CD14-positive monocyte (primary cell): ENCODE measurements at regions of chr2 and their contacts with region 1.

Region 1: GRCh38 chr2:25131567-25132298 is 36.6 kb downstream of the POMC start:
- DNase-seq: no peak
- H3K4me3 ChIP-seq: peak overlapping the region in 1 of 3 experiments; percentile 51
- H3K4me3 Mint-ChIP-seq: peak overlapping the region; percentile 73 to 87
- H3K27ac ChIP-seq: no peak overlapping the region
- H3K27ac Mint-ChIP-seq: no peak overlapping the region
- H3K4me1 ChIP-seq: peaks cover 8 to 16% of the 10 kb centered on the region in 2 donors
- H3K4me1 Mint-ChIP-seq: peaks cover 20% of the 10 kb centered on the region
- H3K27me3 ChIP-seq: peaks cover 22 to 56% of the 10 kb centered on the region in 2 donors
- H3K27me3 Mint-ChIP-seq: peaks cover 60 to 71% (median 67%) of the 10 kb centered on the region in 3 donors
- CTCF ChIP-seq: no peak

Region 2: GRCh38 chr2:24409700-24410556 is 721.8 kb before region 1 on chr2:
- intact Hi-C with region 1: loop called in 1 of 2 experiments (anchors 5 kb)
- DNase-seq: peak; percentile 37 to 58 (median 58)
- H3K4me3 ChIP-seq: no peak overlapping the region
- H3K4me3 Mint-ChIP-seq: no peak overlapping the region
- H3K27ac ChIP-seq: no peak overlapping the region
- H3K27ac Mint-ChIP-seq: no peak overlapping the region
- H3K4me1 ChIP-seq: no peaks in the 10 kb centered on the region
- H3K4me1 Mint-ChIP-seq: no peaks in the 10 kb centered on the region
- H3K27me3 ChIP-seq: peaks cover 0 to 4% of the 10 kb centered on the region in 2 donors
- H3K27me3 Mint-ChIP-seq: peaks cover 0 to 9% (median 0%) of the 10 kb centered on the region in 3 donors
- CTCF ChIP-seq: peak; percentile 80

Region 3: GRCh38 chr2:24971536-24972314 is 160.0 kb before region 1 on chr2 and contains the start of gene DNAJC27:
- intact Hi-C with region 1: loop called (anchors 2 kb)
- DNase-seq: peak; percentile 95 to 97 (median 96)
- H3K4me3 ChIP-seq: peak within 1 kb of the TSS; percentile 64 to 84 (median 76)
- H3K4me3 Mint-ChIP-seq: peak within 1 kb of the TSS; percentile 92 to 97
- H3K27ac ChIP-seq: peak within 1 kb of the TSS; percentile 95 to 96
- H3K27ac Mint-ChIP-seq: peak within 1 kb of the TSS; percentile 99 to 100 (median 100)
- H3K4me1 ChIP-seq: peaks cover 6 to 26% of the 10 kb centered on the region in 2 donors
- H3K4me1 Mint-ChIP-seq: peaks cover 13% of the 10 kb centered on the region
- H3K27me3 ChIP-seq: no peaks in the 10 kb centered on the region
- H3K27me3 Mint-ChIP-seq: no peaks in the 10 kb centered on the region
- CTCF ChIP-seq: no peak
- polyA plus RNA-seq, gene DNAJC27: 0.86 to 2.8 (median 2.2) TPM

Region 4: GRCh38 chr2:24977631-24978030 is 154.1 kb before region 1 on chr2:
- intact Hi-C with region 1: loop called (anchors 2 kb)
- DNase-seq: no peak
- H3K4me3 ChIP-seq: no peak overlapping the region
- H3K4me3 Mint-ChIP-seq: no peak overlapping the region
- H3K27ac ChIP-seq: no peak overlapping the region
- H3K27ac Mint-ChIP-seq: no peak overlapping the region
- H3K4me1 ChIP-seq: peaks cover 0 to 8% of the 10 kb centered on the region in 2 donors
- H3K4me1 Mint-ChIP-seq: peaks cover 4% of the 10 kb centered on the region
- H3K27me3 ChIP-seq: no peaks in the 10 kb centered on the region
- H3K27me3 Mint-ChIP-seq: peaks cover 0 to 3% (median 0%) of the 10 kb centered on the region in 3 donors
- CTCF ChIP-seq: no peak

Region 5: GRCh38 chr2:25041928-25042320 is 89.8 kb before region 1 on chr2 and contains the start of gene EFR3B:
- intact Hi-C with region 1: loop called in 1 of 2 experiments (anchors 5 kb)
- DNase-seq: peak; percentile 90 to 92 (median 91)
- H3K4me3 ChIP-seq: peak within 1 kb of the TSS; percentile 38 to 81 (median 40)
- H3K4me3 Mint-ChIP-seq: peak within 1 kb of the TSS; percentile 77 to 92
- H3K27ac ChIP-seq: no peak within 1 kb of the TSS
- H3K27ac Mint-ChIP-seq: peak within 1 kb of the TSS in 3 of 7 donors; percentile 31 to 54 (median 54)
- H3K4me1 ChIP-seq: peaks cover 18 to 20% of the 10 kb centered on the region in 2 donors
- H3K4me1 Mint-ChIP-seq: peaks cover 24% of the 10 kb centered on the region
- H3K27me3 ChIP-seq: peaks cover 28 to 52% of the 10 kb centered on the region in 2 donors
- H3K27me3 Mint-ChIP-seq: peaks cover 53 to 73% (median 58%) of the 10 kb centered on the region in 3 donors
- CTCF ChIP-seq: no peak
- polyA plus RNA-seq, gene EFR3B: not detected

Region 6: DNA sequence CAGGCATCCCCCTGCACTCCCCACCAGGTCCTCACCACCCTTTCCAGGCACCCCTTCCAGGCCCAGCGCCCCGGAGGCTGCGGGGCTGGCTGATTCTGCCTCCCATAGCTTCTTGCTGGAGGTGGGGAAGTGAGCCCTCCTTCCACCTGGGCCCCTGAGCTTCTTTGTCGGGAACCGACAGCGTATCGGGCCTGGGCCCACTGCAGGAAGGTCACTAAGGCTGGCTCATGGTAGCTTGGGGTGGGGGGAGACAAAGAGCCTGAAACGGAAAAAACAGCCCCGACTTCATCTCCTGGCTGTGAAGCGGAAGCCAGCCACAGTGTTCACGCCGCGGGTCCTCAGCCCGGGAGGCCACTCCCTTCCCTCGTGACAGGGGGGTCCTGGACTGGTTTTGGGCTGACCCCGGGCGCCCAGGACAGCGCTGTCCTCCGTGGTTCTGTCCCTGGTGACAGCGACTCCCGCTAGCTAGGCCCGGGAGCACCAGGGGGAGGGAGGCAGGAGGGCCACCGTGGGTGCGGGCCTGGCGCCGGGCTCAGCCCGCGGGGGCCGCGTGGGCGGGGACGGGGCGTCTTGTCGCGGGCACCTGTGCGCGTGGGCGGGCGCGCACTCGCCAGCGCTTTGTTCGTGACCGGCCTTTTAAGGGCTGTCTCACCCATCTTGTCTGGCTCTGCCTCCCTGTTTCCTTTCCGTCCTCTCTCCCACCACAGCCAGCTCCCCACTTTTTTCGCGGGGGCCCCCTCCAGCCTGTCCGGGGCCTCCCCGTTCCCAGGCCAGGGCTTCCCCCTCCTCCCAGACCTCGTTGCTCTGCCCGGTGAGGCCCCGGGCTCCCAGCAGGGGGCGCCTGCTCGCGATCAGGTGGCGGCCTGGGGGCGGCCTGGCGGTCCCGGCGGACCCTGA is 145.1 kb after region 1 on chr2:
- intact Hi-C with region 1: no loop called
- DNase-seq: peak; percentile 59 to 63 (median 63)
- H3K4me3 ChIP-seq: peak overlapping the region; percentile 25 to 74 (median 35)
- H3K4me3 Mint-ChIP-seq: peak overlapping the region; percentile 76 to 85
- H3K27ac ChIP-seq: peak overlapping the region in 1 of 2 donors; percentile 50
- H3K27ac Mint-ChIP-seq: peak overlapping the region in 4 of 7 donors; percentile 30 to 88 (median 69)
- H3K4me1 ChIP-seq: peaks cover 76 to 82% of the 10 kb centered on the region in 2 donors
- H3K4me1 Mint-ChIP-seq: peaks cover 70% of the 10 kb centered on the region
- H3K27me3 ChIP-seq: no peaks in the 10 kb centered on the region
- H3K27me3 Mint-ChIP-seq: peaks cover 3 to 11% (median 11%) of the 10 kb centered on the region in 3 donors
- CTCF ChIP-seq: peak; percentile 99

Region 7: DNA sequence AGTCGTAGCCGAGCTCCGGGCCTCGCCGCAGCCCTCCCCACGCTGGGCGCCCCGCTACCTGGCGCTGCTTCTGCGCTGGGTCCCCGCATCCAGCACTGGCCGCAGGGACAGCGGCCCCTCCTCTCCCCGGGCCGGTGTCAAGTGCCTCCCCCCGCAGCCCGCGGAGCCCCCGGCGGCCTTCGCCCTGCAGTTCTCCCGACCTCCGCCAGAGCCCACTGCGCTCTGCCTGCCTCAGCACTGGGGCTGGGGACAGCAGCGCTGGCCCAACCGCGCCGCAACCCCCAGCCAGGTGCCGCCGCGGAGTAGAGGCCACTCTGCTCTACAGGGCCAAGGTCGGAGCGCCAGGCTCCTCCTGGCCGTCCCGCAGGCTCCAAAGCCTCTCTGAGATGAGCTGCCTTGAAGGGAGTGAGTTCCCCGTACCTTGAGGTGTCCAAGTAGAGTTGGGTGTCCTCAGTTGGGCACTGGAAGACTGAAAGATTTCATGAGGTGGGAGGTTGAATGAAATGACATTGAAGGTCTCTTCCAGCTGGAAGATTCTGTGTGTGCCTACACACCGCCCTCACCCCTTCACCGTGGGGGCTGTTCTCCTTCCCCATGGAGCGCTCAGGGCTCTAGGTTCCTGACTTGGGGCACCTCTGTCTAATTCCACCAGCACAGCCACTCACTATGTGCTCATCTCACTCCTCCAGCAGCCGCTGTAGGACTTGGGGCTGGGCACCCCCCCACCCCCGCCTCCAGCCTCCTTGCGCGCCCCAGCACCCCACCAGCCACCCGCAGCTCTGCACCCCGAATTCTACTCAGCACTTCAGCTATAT is 210.8 kb after region 1 on chr2:
- intact Hi-C with region 1: no loop called
- DNase-seq: peak; percentile 70 to 73 (median 72)
- H3K4me3 ChIP-seq: peak overlapping the region; percentile 18 to 78 (median 52)
- H3K4me3 Mint-ChIP-seq: peak overlapping the region; percentile 76 to 80
- H3K27ac ChIP-seq: no peak overlapping the region
- H3K27ac Mint-ChIP-seq: peak overlapping the region in 1 of 7 donors; percentile 37
- H3K4me1 ChIP-seq: peaks cover 7 to 27% of the 10 kb centered on the region in 2 donors
- H3K4me1 Mint-ChIP-seq: peaks cover 24% of the 10 kb centered on the region
- H3K27me3 ChIP-seq: peaks cover 0 to 7% of the 10 kb centered on the region in 2 donors
- H3K27me3 Mint-ChIP-seq: peaks cover 9 to 22% (median 14%) of the 10 kb centered on the region in 3 donors
- CTCF ChIP-seq: peak; percentile 99